Transverse colon (tissue), 4 donors: ENCODE measurements at regions of chr2 and their contacts with region 1.

Region 1: GRCh38 chr2:99559075-99559662 is 69.4 kb upstream of the REV1 start:
- DNase-seq: peak; percentile 85
- H3K4me3 ChIP-seq: no peak overlapping the region
- H3K27ac ChIP-seq: no peak overlapping the region
- H3K4me1 ChIP-seq: no peaks in the 10 kb centered on the region
- H3K27me3 ChIP-seq: no peaks in the 10 kb centered on the region
- CTCF ChIP-seq: peak; percentile 94 to 99 (median 98)
- EP300 ChIP-seq: no peak
- POLR2A ChIP-seq: no peak

Region 2: DNA sequence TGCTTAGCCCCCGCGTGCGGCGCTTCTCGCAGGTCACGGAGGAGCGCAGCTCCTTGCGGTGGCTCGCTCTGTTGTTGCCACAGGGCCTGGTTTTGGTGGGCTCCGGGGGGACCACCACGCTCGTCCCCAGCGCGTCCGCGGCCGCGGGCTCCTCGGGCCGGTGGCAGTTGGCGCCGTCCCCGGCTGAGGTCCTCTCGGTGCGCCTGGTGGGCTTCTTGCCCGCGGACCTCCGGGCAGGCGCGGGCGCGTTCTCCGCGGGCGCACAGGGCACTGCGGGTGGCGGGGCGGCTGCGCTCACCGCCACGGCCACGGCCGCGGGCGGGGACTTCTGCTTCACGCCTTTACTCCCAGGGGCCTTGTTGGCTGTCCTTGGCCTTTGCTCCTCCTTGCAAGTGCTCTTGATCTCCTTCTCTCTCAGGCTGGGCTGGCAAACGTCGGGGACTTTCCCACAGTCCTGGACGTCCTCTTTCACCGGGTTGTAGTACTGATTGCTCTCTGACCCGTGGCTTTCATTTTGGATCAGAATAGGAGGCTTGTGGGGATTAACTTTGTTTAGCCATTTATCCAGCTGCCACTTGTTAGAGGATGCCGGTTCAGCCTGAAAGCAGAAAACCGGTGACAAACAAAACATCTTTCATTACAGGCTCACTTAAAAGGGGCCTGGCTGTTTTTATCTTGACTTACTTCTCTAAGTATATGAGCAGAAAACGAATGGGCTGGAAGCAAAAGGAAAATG is 34.7 kb after region 1 on chr2:
- in situ Hi-C with region 1: no loop called
- intact Hi-C with region 1: no loop called
- DNase-seq: no peak
- H3K4me3 ChIP-seq: no peak overlapping the region
- H3K27ac ChIP-seq: no peak overlapping the region
- H3K4me1 ChIP-seq: no peaks in the 10 kb centered on the region
- H3K27me3 ChIP-seq: no peaks in the 10 kb centered on the region
- CTCF ChIP-seq: no peak
- EP300 ChIP-seq: no peak
- POLR2A ChIP-seq: no peak

Region 3: DNA sequence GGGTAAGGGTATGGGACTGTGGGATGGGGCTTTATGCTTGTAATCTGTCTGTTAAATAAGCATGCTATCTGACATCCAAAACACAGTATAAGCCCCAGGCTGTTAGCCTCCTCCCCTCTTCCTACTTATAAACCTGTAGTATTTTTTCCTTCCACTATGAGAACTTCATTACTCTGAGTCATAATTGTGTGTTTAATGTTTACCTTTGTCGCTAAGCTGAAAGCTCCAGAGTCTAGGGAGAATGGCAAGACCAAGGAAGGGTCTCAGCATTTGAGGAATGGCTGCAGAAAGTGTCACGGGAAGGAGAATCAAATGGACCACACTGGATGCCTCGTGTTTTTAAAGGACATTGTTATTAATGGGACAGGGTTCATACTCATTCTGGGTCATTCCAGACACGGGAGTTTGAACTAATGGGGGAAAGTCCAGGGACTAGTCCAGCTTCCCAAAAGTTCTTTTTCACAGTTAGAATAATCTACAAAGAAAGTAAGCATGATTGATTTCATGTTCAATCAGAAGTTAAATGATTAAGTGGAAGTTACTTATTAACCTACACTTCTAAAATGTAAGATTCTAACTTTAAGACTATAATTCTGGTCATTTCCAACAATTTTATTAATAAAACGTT is 291.0 kb after region 1 on chr2:
- in situ Hi-C with region 1: no loop called
- intact Hi-C with region 1: no loop called
- DNase-seq: no peak
- H3K4me3 ChIP-seq: no peak overlapping the region
- H3K27ac ChIP-seq: no peak overlapping the region
- H3K4me1 ChIP-seq: no peaks in the 10 kb centered on the region
- H3K27me3 ChIP-seq: no peaks in the 10 kb centered on the region
- CTCF ChIP-seq: no peak
- EP300 ChIP-seq: no peak
- POLR2A ChIP-seq: no peak

Region 4: GRCh38 chr2:100104718-100105677 is 545.8 kb after region 1 on chr2:
- in situ Hi-C with region 1: no loop called
- intact Hi-C with region 1: loop called (anchors 5 kb)
- DNase-seq: no peak
- H3K4me3 ChIP-seq: peak overlapping the region; percentile 47 to 61 (median 50)
- H3K27ac ChIP-seq: peak overlapping the region; percentile 62 to 76 (median 72)
- H3K4me1 ChIP-seq: peaks cover 0 to 23% (median 11%) of the 10 kb centered on the region in 4 donors
- H3K27me3 ChIP-seq: peaks cover 20% of the 10 kb centered on the region
- CTCF ChIP-seq: no peak
- EP300 ChIP-seq: no peak
- POLR2A ChIP-seq: no peak